ENCODE measurements at regions of chr10 and their contacts with region 1.

Region 1: GRCh38 chr10:118720685-118721538 is 33.9 kb downstream of the CACUL1 start:
- DNase-seq: peak; percentile 75
- H3K4me3 ChIP-seq: no peak overlapping the region
- H3K27ac ChIP-seq: no peak overlapping the region
- H3K4me1 ChIP-seq: peaks cover 11% of the 10 kb centered on the region
- H3K27me3 ChIP-seq: no peaks in the 10 kb centered on the region
- CTCF ChIP-seq: peak; percentile 47 to 51
- POLR2A ChIP-seq: no peak

Region 2: GRCh38 chr10:118594392-118595063 is 126.4 kb before region 1 on chr10:
- CTCF ChIA-PET with region 1: interaction called, 20 read pairs
- POLR2A ChIA-PET with region 1: no interaction called
- dilution Hi-C with region 1: no loop called
- intact Hi-C with region 1: loop called (anchors 1 kb)
- DNase-seq: peak; percentile 35
- H3K4me3 ChIP-seq: no peak overlapping the region
- H3K27ac ChIP-seq: no peak overlapping the region
- H3K4me1 ChIP-seq: no peaks in the 10 kb centered on the region
- H3K27me3 ChIP-seq: peaks cover 6 to 16% of the 10 kb centered on the region in 2 experiments
- CTCF ChIP-seq: peak; percentile 22 to 48
- POLR2A ChIP-seq: no peak

Region 3: GRCh38 chr10:118669020-118669791 is 51.7 kb before region 1 on chr10:
- CTCF ChIA-PET with region 1: interaction called, 10 read pairs
- POLR2A ChIA-PET with region 1: no interaction called
- dilution Hi-C with region 1: no loop called
- intact Hi-C with region 1: no loop called
- DNase-seq: peak; percentile 55
- H3K4me3 ChIP-seq: no peak overlapping the region
- H3K27ac ChIP-seq: no peak overlapping the region
- H3K4me1 ChIP-seq: no peaks in the 10 kb centered on the region
- H3K27me3 ChIP-seq: peaks cover 0 to 2% of the 10 kb centered on the region in 2 experiments
- CTCF ChIP-seq: no peak
- POLR2A ChIP-seq: no peak

Region 4: DNA sequence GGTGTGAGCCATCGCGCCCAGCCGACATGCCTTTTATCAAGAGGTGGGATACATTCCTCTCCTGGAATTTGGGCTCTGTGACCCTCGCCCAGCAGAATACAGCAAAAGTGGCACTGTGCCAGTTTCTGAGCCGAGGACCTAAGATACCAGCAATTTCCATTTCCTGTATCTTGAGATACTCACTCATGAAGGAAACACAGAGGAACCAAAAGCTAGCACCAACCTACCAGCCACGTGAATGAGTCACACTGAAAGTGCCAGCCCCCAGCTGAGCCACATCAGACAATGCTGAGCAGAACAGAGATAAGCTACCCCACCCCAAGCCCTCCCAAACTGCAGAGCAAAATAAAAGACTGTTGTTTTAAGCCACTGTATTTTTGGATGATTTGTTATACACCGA is 22.5 kb before region 1 on chr10:
- CTCF ChIA-PET with region 1: interaction called, 14 read pairs
- POLR2A ChIA-PET with region 1: no interaction called
- dilution Hi-C with region 1: no loop called
- intact Hi-C with region 1: no loop called
- DNase-seq: peak; percentile 71
- H3K4me3 ChIP-seq: no peak overlapping the region
- H3K27ac ChIP-seq: no peak overlapping the region
- H3K4me1 ChIP-seq: peaks cover 13% of the 10 kb centered on the region
- H3K27me3 ChIP-seq: no peaks in the 10 kb centered on the region
- CTCF ChIP-seq: no peak
- POLR2A ChIP-seq: no peak

Region 5: DNA sequence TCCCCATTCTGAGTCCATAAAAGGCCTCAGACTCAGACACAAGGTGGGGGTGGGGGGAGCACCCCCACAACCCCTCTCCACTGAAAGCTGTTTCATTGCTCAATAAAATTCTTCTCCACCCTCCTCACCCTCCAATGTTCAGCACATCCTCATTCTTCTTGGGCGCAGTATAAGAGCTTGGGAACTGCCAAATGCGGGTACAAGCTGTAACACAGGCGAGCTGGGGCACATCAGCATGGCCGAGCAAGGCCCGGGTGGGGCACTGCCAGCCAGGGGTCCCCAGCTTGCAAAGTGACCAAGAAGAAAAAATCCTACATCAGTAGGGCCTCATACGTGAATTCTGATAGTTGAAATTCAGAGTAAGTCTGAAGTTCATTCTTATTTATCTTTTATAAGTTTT is 16.2 kb before region 1 on chr10:
- CTCF ChIA-PET with region 1: interaction called, 22 read pairs
- POLR2A ChIA-PET with region 1: no interaction called
- dilution Hi-C with region 1: no loop called
- intact Hi-C with region 1: no loop called
- DNase-seq: no peak
- H3K4me3 ChIP-seq: no peak overlapping the region
- H3K27ac ChIP-seq: no peak overlapping the region
- H3K4me1 ChIP-seq: peaks cover 13% of the 10 kb centered on the region
- H3K27me3 ChIP-seq: no peaks in the 10 kb centered on the region
- CTCF ChIP-seq: no peak
- POLR2A ChIP-seq: no peak

Region 6: GRCh38 chr10:118850418-118851061 is 129.6 kb after region 1 on chr10:
- CTCF ChIA-PET with region 1: interaction called, 9 read pairs
- POLR2A ChIA-PET with region 1: no interaction called
- dilution Hi-C with region 1: no loop called
- intact Hi-C with region 1: loop called (anchors 1 kb)
- DNase-seq: peak; percentile 48
- H3K4me3 ChIP-seq: no peak overlapping the region
- H3K27ac ChIP-seq: no peak overlapping the region
- H3K4me1 ChIP-seq: no peaks in the 10 kb centered on the region
- H3K27me3 ChIP-seq: no peaks in the 10 kb centered on the region
- CTCF ChIP-seq: peak; percentile 64 to 65
- POLR2A ChIP-seq: no peak

Measured in endothelial cell of umbilical vein (primary cell).